ENCODE measurements at regions of chrX and their contacts with region 1.

Region 1: GRCh38 chrX:43969504-43970501 is 3.4 kb downstream of the NDP start:
- DNase-seq: no peak
- H3K4me3 ChIP-seq: no peak overlapping the region
- H3K4me3 Mint-ChIP-seq: no peak overlapping the region
- H3K27ac Mint-ChIP-seq: no peak overlapping the region
- H3K4me1 ChIP-seq: no peaks in the 10 kb centered on the region
- H3K4me1 Mint-ChIP-seq: peaks cover 7% of the 10 kb centered on the region
- H3K27me3 ChIP-seq: no peaks in the 10 kb centered on the region
- H3K27me3 Mint-ChIP-seq: no peaks in the 10 kb centered on the region
- CTCF ChIP-seq: no peak

Region 2: DNA sequence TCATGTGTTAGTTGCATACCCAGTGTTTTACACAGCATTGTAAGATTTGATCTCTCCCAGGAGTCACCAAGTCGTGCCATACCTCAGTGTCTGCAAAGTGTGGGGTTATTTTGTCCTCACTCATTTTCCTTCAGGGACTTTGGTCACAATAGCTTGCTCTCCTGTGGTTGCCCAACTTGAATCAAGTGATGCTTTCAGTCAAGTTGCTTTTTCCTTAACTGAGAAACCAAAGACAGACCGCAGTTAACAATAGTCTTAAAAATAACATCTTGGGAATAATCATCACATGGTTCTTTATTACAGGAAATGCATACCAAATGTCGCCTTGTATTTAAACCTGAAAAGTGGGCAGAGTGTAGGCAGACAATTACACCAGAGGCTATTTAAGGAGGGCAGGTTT is 47.9 kb after region 1 on chrX:
- CTCF ChIA-PET with region 1: no interaction called
- POLR2A ChIA-PET with region 1: no interaction called
- intact Hi-C with region 1: loop called (anchors 5 kb)
- DNase-seq: no peak
- H3K4me3 ChIP-seq: no peak overlapping the region
- H3K4me3 Mint-ChIP-seq: no peak overlapping the region
- H3K27ac Mint-ChIP-seq: no peak overlapping the region
- H3K4me1 ChIP-seq: no peaks in the 10 kb centered on the region
- H3K4me1 Mint-ChIP-seq: no peaks in the 10 kb centered on the region
- H3K27me3 ChIP-seq: no peaks in the 10 kb centered on the region
- H3K27me3 Mint-ChIP-seq: no peaks in the 10 kb centered on the region
- CTCF ChIP-seq: no peak

Measured in Caco-2 (cell line).